Lower leg skin (tissue), 4 donors: ENCODE measurements at regions of chr9 and their contacts with region 1.

Region 1: GRCh38 chr9:94982217-94982616 is 255.7 kb downstream of the AOPEP start:
- DNase-seq: no peak
- H3K4me3 ChIP-seq: no peak overlapping the region
- CTCF ChIP-seq: no peak
- POLR2A ChIP-seq: no peak

Region 2: GRCh38 chr9:94971378-94972131 is 10.7 kb before region 1 on chr9:
- intact Hi-C with region 1: loop called (anchors 1 kb)
- DNase-seq: no peak
- H3K4me3 ChIP-seq: no peak overlapping the region
- CTCF ChIP-seq: no peak
- POLR2A ChIP-seq: no peak

Region 3: DNA sequence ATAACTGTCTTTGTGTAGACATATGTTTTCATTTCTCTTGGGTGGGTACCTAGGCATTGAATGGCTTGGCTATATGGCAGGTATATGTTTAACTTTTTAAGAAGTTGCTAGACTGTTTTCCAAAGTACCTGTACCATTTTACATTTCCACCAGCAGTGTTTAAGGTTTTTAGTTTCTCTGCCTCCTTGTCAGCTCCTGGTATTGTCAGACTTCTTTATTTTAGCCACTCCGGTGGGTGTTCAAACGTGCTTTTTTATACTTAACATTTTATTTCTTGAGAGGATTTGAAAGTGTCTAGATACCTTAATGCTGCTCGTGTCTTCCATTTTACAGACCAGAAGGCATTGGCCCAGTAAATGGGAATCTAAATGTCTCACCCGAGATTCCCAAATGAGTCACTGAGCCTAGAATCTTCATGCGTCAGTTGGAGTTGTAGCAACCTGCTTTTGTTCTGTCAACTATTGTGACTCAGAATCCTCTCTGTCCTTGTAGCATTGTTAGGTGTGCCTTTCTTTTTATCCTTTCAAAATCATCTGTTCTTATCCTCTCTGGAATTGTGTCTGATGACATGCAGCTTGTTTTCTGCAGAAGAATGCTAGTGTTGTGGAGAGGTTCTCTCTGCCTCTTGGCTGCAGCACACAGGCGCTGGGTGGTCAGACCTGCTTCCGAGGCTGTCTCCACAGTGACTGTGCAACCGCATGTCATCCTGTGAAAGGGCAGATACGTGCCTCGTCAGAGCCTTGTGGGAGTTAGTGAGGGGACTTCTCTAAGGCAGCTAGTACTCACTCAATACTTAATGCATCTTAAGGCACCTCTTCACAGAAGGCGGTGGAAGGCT is 36.1 kb after region 1 on chr9:
- intact Hi-C with region 1: no loop called
- DNase-seq: no peak
- H3K4me3 ChIP-seq: no peak overlapping the region
- CTCF ChIP-seq: no peak
- POLR2A ChIP-seq: no peak